Activated CD8-positive, alpha-beta T cell treated with anti-CD3 and anti-CD28 coated beads, Interleukin-2, amount 10 ng/mL, durations not matched to agents 7 days and 5 days (primary cell): ENCODE measurements at regions of chr16 and their contacts with region 1.

Region 1: GRCh38 chr16:30429678-30430427 is at the start of gene DCTPP1:
- DNase-seq: peak; percentile 99
- ATAC-seq: peak; percentile 99
- H3K4me3 Mint-ChIP-seq: no peak within 1 kb of the TSS
- H3K27ac Mint-ChIP-seq: no peak within 1 kb of the TSS
- H3K4me1 Mint-ChIP-seq: peaks cover 40% of the 10 kb centered on the region
- H3K27me3 Mint-ChIP-seq: no peaks in the 10 kb centered on the region
- total RNA-seq, gene DCTPP1: 87.3 to 92.8 TPM

Region 2: GRCh38 chr16:30361180-30361579 is 68.7 kb before region 1 on chr16:
- CTCF ChIA-PET with region 1: no interaction called
- POLR2A ChIA-PET with region 1: no interaction called
- DNase-seq: no peak
- ATAC-seq: no peak
- H3K4me3 Mint-ChIP-seq: no peak overlapping the region
- H3K27ac Mint-ChIP-seq: no peak overlapping the region
- H3K4me1 Mint-ChIP-seq: peaks cover 38% of the 10 kb centered on the region
- H3K27me3 Mint-ChIP-seq: no peaks in the 10 kb centered on the region

Region 3: GRCh38 chr16:30407102-30407803 is 22.6 kb before region 1 on chr16 and contains the start of gene ZNF771:
- CTCF ChIA-PET with region 1: interaction called, 13 read pairs
- POLR2A ChIA-PET with region 1: no interaction called
- DNase-seq: peak; percentile 93
- ATAC-seq: peak; percentile 91
- H3K4me3 Mint-ChIP-seq: peak within 1 kb of the TSS; percentile 83
- H3K27ac Mint-ChIP-seq: peak within 1 kb of the TSS; percentile 91
- H3K4me1 Mint-ChIP-seq: peaks cover 29% of the 10 kb centered on the region
- H3K27me3 Mint-ChIP-seq: peaks cover 11% of the 10 kb centered on the region
- total RNA-seq, gene ZNF771: 3.3 to 3.9 TPM

Region 4: DNA sequence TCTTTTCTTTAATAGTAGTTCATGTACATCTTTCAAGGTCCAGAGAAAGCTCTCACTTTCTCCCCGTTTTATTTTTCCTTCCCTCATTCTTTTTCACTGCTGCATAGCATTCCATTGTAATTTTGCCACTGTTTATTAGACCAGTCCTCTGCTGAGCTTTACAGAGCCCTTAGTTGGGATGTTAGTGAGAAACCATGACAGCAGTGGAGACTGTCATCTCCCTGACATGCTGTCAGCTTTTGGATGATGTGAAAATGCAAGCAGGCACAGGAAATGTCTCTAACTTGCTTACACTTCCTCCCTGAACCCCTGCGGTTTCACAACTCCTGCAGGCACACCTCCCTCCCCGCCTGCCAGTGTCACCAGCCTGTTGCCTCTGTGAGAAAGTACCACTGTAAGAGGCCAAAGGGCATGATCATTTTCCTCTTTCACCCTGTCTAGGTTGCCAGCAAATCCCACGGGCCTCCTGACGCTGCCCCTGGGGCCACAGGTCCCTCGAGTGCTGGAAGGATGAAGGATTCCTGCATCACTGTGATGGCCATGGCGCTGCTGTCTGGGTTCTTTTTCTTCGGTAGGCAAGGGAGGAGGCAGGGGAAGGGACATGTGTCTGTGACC is 42.6 kb after region 1 on chr16 and contains the start of gene ITGAL:
- CTCF ChIA-PET with region 1: interaction called, 80 read pairs
- POLR2A ChIA-PET with region 1: interaction called, 27 read pairs
- DNase-seq: peak; percentile 92
- ATAC-seq: peak; percentile 85
- H3K4me3 Mint-ChIP-seq: peak within 1 kb of the TSS; percentile 98
- H3K27ac Mint-ChIP-seq: peak within 1 kb of the TSS; percentile 96
- H3K4me1 Mint-ChIP-seq: peaks cover 61% of the 10 kb centered on the region
- H3K27me3 Mint-ChIP-seq: no peaks in the 10 kb centered on the region
- total RNA-seq, gene ITGAL: 458 to 471 TPM

Region 5: GRCh38 chr16:30509081-30509765 is 79.4 kb after region 1 on chr16:
- CTCF ChIA-PET with region 1: interaction called, 14 read pairs
- POLR2A ChIA-PET with region 1: interaction called, 3 read pairs
- DNase-seq: no peak
- ATAC-seq: no peak
- H3K4me3 Mint-ChIP-seq: no peak overlapping the region
- H3K27ac Mint-ChIP-seq: no peak overlapping the region
- H3K4me1 Mint-ChIP-seq: peaks cover 7% of the 10 kb centered on the region
- H3K27me3 Mint-ChIP-seq: no peaks in the 10 kb centered on the region

Region 6: GRCh38 chr16:30571695-30572600 is 142.1 kb after region 1 on chr16 and contains the start of gene ZNF688:
- CTCF ChIA-PET with region 1: interaction called, 15 read pairs
- POLR2A ChIA-PET with region 1: interaction called, 5 read pairs
- DNase-seq: peak; percentile 98
- ATAC-seq: peak; percentile 87
- H3K4me3 Mint-ChIP-seq: peak within 1 kb of the TSS; percentile 98
- H3K27ac Mint-ChIP-seq: peak within 1 kb of the TSS; percentile 94
- H3K4me1 Mint-ChIP-seq: peaks cover 48% of the 10 kb centered on the region
- H3K27me3 Mint-ChIP-seq: no peaks in the 10 kb centered on the region
- total RNA-seq, gene ZNF688: 12.5 to 13.4 TPM

Region 7: GRCh38 chr16:30615358-30616091 is 185.7 kb after region 1 on chr16:
- CTCF ChIA-PET with region 1: interaction called, 22 read pairs
- POLR2A ChIA-PET with region 1: interaction called, 4 read pairs
- DNase-seq: peak; percentile 83
- ATAC-seq: peak; percentile 68
- H3K4me3 Mint-ChIP-seq: no peak overlapping the region
- H3K27ac Mint-ChIP-seq: no peak overlapping the region
- H3K4me1 Mint-ChIP-seq: peaks cover 14% of the 10 kb centered on the region
- H3K27me3 Mint-ChIP-seq: peaks cover 13% of the 10 kb centered on the region